ENCODE measurements at regions of chr6 and their contacts with region 1.

Region 1: GRCh38 chr6:149925974-149926777 is 3.3 kb upstream of the RAET1G start:
- DNase-seq: peak; percentile 87 to 91
- ATAC-seq: peak; percentile 89 to 94 (median 92)
- H3K4me3 ChIP-seq: peak overlapping the region; percentile 38 to 62 (median 60)
- H3K27ac ChIP-seq: peak overlapping the region in 9 of 10 donors; percentile 27 to 67 (median 57)
- H3K4me1 ChIP-seq: peaks cover 3 to 33% (median 23%) of the 10 kb centered on the region in 9 donors
- H3K27me3 ChIP-seq: peaks cover 0 to 92% (median 28%) of the 10 kb centered on the region in 7 donors
- CTCF ChIP-seq: peak; percentile 81 to 93 (median 88)

Region 2: DNA sequence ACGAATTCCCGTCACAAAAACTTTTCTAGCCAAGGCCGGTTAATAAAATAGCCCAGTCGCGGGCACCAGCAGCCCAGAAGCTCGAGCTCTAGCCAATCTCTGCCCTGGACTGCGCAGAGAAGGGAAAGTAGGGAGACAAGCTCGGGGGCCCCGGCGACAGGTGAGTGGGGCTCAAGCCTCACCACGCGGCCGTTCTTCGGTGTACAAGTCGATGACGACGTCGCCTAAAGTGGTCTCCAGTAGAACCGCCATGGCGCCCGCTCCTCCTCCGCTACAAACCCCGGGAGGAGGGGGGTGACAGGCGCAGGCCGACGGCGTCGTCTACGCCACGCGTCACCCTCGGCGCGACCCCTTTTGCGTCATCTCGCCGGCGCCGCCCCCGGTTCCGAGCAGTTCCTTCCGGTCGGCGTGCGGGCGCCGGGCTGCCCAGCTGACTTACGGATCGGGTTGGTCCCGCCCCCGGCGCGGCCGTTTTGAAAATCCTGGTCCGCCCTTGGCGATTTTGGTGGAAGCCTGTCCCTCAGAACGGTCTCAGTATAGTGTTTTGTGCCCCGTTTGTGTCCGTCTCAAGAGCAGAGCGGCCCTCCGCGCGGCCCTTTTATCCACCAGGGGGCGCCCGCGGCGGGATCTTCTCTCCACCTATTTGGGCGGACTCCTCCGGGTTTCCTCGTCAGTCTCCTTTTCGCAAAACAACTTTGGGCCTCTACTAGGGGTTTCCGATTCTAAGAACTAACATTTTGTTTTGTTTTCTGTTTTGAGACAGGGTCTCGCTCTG is 380.2 kb before region 1 on chr6 and contains the start of gene PPIL4:
- intact Hi-C with region 1: loop called in 1 of 10 experiments (anchors 10 kb)
- DNase-seq: peak; percentile 96 to 98
- ATAC-seq: peak; percentile 98 to 99 (median 99)
- H3K4me3 ChIP-seq: peak within 1 kb of the TSS; percentile 65 to 98 (median 86)
- H3K27ac ChIP-seq: peak within 1 kb of the TSS; percentile 84 to 99 (median 95)
- H3K4me1 ChIP-seq: peaks cover 6 to 39% (median 33%) of the 10 kb centered on the region in 9 donors
- H3K27me3 ChIP-seq: peaks cover 0 to 3% (median 0%) of the 10 kb centered on the region in 7 donors
- CTCF ChIP-seq: peak; percentile 66 to 91 (median 82)
- total RNA-seq, gene PPIL4: 15.2 to 22.0 (median 18.1) TPM

Region 3: GRCh38 chr6:149683256-149683859 is 242.8 kb before region 1 on chr6:
- intact Hi-C with region 1: no loop called
- DNase-seq: peak in 1 of 2 donors; percentile 19
- ATAC-seq: peak; percentile 42 to 94 (median 83)
- H3K4me3 ChIP-seq: no peak overlapping the region
- H3K27ac ChIP-seq: peak overlapping the region in 9 of 10 donors; percentile 21 to 79 (median 56)
- H3K4me1 ChIP-seq: peaks cover 0 to 23% (median 5%) of the 10 kb centered on the region in 9 donors
- H3K27me3 ChIP-seq: no peaks in the 10 kb centered on the region
- CTCF ChIP-seq: no peak

Region 4: GRCh38 chr6:149717588-149718458 is 208.4 kb before region 1 on chr6 and contains the start of gene LATS1:
- intact Hi-C with region 1: loop called in 7 of 10 experiments (anchors 2 to 10 kb)
- DNase-seq: peak; percentile 91 to 93
- ATAC-seq: peak; percentile 93 to 97 (median 95)
- H3K4me3 ChIP-seq: peak within 1 kb of the TSS; percentile 63 to 98 (median 88)
- H3K27ac ChIP-seq: peak within 1 kb of the TSS; percentile 90 to 100 (median 99)
- H3K4me1 ChIP-seq: peaks cover 0 to 41% (median 28%) of the 10 kb centered on the region in 9 donors
- H3K27me3 ChIP-seq: no peaks in the 10 kb centered on the region
- CTCF ChIP-seq: no peak
- total RNA-seq, gene LATS1: 10.5 to 16.9 (median 13.8) TPM

Region 5: DNA sequence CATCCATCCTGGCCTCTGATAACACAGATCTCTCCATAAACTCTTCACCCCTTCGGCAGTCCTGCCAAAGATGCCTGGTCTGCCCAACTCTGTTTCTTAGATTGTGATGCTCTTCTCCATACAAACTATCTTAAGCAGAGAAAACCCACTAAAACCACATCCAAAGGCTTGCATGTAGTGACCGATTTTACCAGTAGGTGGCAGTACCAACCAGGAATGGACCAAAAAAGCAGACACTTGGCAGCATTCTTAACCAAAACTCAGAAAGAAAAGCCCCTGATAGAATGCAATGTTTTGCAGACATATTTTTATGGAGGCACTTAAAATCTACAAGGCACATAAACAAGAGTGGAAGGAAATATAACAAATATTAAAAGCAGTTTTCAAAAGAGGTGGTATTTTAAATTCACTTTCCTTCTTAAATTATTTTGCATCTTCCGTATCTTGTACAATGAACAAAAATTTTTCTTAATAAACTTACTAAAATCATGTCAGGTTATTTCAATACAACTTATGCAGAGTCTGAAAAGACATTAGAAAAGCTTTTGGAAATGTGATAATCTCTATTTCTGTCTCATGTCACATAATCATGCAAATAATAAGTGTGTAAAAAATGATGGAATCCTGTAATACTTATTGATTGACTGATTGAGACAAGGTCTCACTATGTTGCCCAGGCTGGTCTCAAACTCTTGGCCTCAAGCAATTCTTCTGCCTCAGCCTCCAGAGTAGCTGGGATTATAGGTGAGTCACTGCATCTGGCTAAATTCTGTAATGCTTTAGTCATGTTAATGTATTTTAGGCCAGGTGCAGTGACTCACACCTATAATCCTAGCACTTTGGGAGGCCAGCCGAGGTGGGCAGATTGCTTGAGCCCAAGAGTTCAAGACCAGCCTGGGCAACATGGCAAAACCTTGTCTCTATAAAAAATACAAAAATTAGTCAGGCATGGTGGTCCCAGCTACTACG is 91.4 kb before region 1 on chr6:
- intact Hi-C with region 1: loop called in 9 of 10 experiments (anchors 1 to 5 kb)
- DNase-seq: peak in 1 of 2 donors; percentile 54
- ATAC-seq: peak in 4 of 8 donors; percentile 37 to 72 (median 56)
- H3K4me3 ChIP-seq: no peak overlapping the region
- H3K27ac ChIP-seq: no peak overlapping the region
- H3K4me1 ChIP-seq: peaks cover 0 to 1% (median 0%) of the 10 kb centered on the region in 9 donors
- H3K27me3 ChIP-seq: no peaks in the 10 kb centered on the region
- CTCF ChIP-seq: peak; percentile 82 to 97 (median 93)

Region 6: GRCh38 chr6:149895833-149896271 is 30.3 kb before region 1 on chr6:
- intact Hi-C with region 1: loop called in 1 of 10 experiments (anchors 2 kb)
- DNase-seq: peak; percentile 30 to 68
- ATAC-seq: peak; percentile 19 to 89 (median 82)
- H3K4me3 ChIP-seq: no peak overlapping the region
- H3K27ac ChIP-seq: peak overlapping the region in 9 of 10 donors; percentile 51 to 83 (median 65)
- H3K4me1 ChIP-seq: peaks cover 6 to 35% (median 27%) of the 10 kb centered on the region in 9 donors
- H3K27me3 ChIP-seq: no peaks in the 10 kb centered on the region
- CTCF ChIP-seq: no peak

Region 7: GRCh38 chr6:151430886-151431285 is 1504.7 kb after region 1 on chr6:
- intact Hi-C with region 1: no loop called
- DNase-seq: no peak
- ATAC-seq: no peak
- H3K4me3 ChIP-seq: no peak overlapping the region
- H3K27ac ChIP-seq: no peak overlapping the region
- H3K4me1 ChIP-seq: no peaks in the 10 kb centered on the region
- H3K27me3 ChIP-seq: no peaks in the 10 kb centered on the region
- CTCF ChIP-seq: no peak